B cell (primary cell): ENCODE measurements at regions of chr12 and their contacts with region 1.

Region 1: GRCh38 chr12:112025808-112026375 is 12.7 kb downstream of the ERP29 start:
- DNase-seq: peak; percentile 27
- ATAC-seq: no peak
- H3K4me3 ChIP-seq: no peak overlapping the region
- H3K4me3 Mint-ChIP-seq: no peak overlapping the region
- H3K27ac ChIP-seq: peak overlapping the region; percentile 0 to 48
- H3K27ac Mint-ChIP-seq: peak overlapping the region; percentile 28
- H3K4me1 ChIP-seq: peaks cover 9 to 10% of the 10 kb centered on the region in 2 donors
- H3K4me1 Mint-ChIP-seq: peaks cover 42% of the 10 kb centered on the region
- H3K27me3 ChIP-seq: no peaks in the 10 kb centered on the region
- H3K27me3 Mint-ChIP-seq: no peaks in the 10 kb centered on the region
- CTCF ChIP-seq: no peak

Region 2: DNA sequence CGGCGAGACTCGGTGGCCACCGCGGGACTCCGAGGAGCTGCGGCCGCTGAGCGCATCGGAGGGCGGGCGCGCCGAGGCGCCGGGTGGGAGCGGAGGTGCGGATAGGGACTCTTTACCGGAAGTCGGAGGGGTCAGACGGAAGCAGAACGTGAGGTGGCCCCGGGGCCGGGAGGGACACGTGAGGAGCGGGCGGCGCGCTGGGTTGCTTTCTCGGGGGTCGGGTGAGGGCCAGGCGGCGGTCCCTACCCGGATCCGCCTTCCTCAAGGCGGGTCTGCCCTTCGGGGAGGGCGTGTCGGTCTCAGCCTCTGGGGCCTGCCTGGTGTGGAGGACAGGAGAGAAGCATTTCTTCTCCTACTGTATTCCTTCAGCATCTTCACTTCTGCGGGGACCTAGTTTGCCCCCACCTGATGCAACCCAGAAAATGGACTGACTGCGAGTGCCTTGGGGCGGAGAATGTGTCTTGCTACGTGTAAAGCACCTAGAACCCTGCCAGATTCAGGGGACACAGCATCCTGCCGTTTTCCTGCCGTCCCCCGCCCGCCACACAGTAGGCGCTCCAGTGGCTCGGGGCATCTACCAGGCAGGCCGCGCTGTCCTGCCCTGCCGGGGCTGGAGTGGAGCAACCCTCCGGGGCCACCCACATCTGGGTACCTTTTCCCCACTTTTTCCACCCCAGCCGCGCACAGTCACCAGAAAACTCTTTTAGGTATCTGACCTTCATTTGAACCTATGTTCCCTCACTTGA is 426.3 kb before region 1 on chr12:
- CTCF ChIA-PET with region 1: no interaction called
- POLR2A ChIA-PET with region 1: no interaction called
- intact Hi-C with region 1: no loop called
- DNase-seq: peak; percentile 97
- ATAC-seq: peak; percentile 77
- H3K4me3 ChIP-seq: peak overlapping the region; percentile 60 to 92 (median 85)
- H3K4me3 Mint-ChIP-seq: peak overlapping the region; percentile 90
- H3K27ac ChIP-seq: peak overlapping the region; percentile 75 to 87
- H3K27ac Mint-ChIP-seq: peak overlapping the region; percentile 96
- H3K4me1 ChIP-seq: peaks cover 15% of the 10 kb centered on the region in 2 donors
- H3K4me1 Mint-ChIP-seq: peaks cover 28% of the 10 kb centered on the region
- H3K27me3 ChIP-seq: no peaks in the 10 kb centered on the region
- H3K27me3 Mint-ChIP-seq: no peaks in the 10 kb centered on the region
- CTCF ChIP-seq: no peak

Region 3: GRCh38 chr12:111841750-111842555 is 183.9 kb before region 1 on chr12 and contains the start of gene MAPKAPK5:
- CTCF ChIA-PET with region 1: no interaction called
- POLR2A ChIA-PET with region 1: no interaction called
- intact Hi-C with region 1: no loop called
- DNase-seq: peak; percentile 99
- ATAC-seq: peak; percentile 91
- H3K4me3 ChIP-seq: peak within 1 kb of the TSS; percentile 81 to 99 (median 82)
- H3K4me3 Mint-ChIP-seq: peak within 1 kb of the TSS; percentile 94
- H3K27ac ChIP-seq: peak within 1 kb of the TSS; percentile 85 to 87
- H3K27ac Mint-ChIP-seq: peak within 1 kb of the TSS; percentile 99
- H3K4me1 ChIP-seq: peaks cover 28 to 29% of the 10 kb centered on the region in 2 donors
- H3K4me1 Mint-ChIP-seq: peaks cover 50% of the 10 kb centered on the region
- H3K27me3 ChIP-seq: no peaks in the 10 kb centered on the region
- H3K27me3 Mint-ChIP-seq: no peaks in the 10 kb centered on the region
- CTCF ChIP-seq: no peak
- total RNA-seq, gene MAPKAPK5: 64.4 and 73.1 TPM in 2 replicates

Region 4: GRCh38 chr12:111993292-111994150 is 32.4 kb before region 1 on chr12:
- CTCF ChIA-PET with region 1: no interaction called
- POLR2A ChIA-PET with region 1: no interaction called
- intact Hi-C with region 1: loop called (anchors 5 kb)
- DNase-seq: peak; percentile 16
- ATAC-seq: peak; percentile 10
- H3K4me3 ChIP-seq: peak overlapping the region in 2 of 5 experiments; percentile 7 to 60
- H3K4me3 Mint-ChIP-seq: peak overlapping the region; percentile 91
- H3K27ac ChIP-seq: no peak overlapping the region
- H3K27ac Mint-ChIP-seq: no peak overlapping the region
- H3K4me1 ChIP-seq: peaks cover 42 to 45% of the 10 kb centered on the region in 2 donors
- H3K4me1 Mint-ChIP-seq: peaks cover 42% of the 10 kb centered on the region
- H3K27me3 ChIP-seq: peaks cover 0 to 17% (median 12%) of the 10 kb centered on the region in 4 experiments
- H3K27me3 Mint-ChIP-seq: peaks cover 26% of the 10 kb centered on the region
- CTCF ChIP-seq: no peak

Region 5: DNA sequence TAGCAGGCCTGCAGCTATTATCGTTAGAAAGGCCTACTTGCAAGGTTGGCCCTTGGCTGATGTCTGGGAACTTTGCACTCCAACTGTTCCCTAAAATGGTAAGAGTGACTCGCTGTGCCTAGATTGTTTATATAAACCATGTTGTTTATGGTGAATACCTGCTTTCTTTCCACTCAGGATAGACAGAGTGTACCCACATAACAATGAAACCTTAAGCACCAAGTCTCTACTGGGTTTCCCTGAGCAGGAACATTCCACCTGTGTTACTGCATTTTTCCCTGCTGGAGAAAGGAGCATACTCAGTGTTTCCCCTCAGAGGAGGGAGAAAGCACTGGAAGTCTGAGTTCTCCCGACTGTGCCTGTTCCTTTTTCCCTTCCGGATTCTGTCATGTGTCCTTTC is 20.1 kb after region 1 on chr12:
- CTCF ChIA-PET with region 1: no interaction called
- POLR2A ChIA-PET with region 1: interaction called, 8 read pairs
- intact Hi-C with region 1: loop called (anchors 1 kb)
- DNase-seq: no peak
- ATAC-seq: no peak
- H3K4me3 ChIP-seq: no peak overlapping the region
- H3K4me3 Mint-ChIP-seq: no peak overlapping the region
- H3K27ac ChIP-seq: no peak overlapping the region
- H3K27ac Mint-ChIP-seq: no peak overlapping the region
- H3K4me1 ChIP-seq: peaks cover 5 to 6% of the 10 kb centered on the region in 2 donors
- H3K4me1 Mint-ChIP-seq: peaks cover 8% of the 10 kb centered on the region
- H3K27me3 ChIP-seq: no peaks in the 10 kb centered on the region
- H3K27me3 Mint-ChIP-seq: no peaks in the 10 kb centered on the region
- CTCF ChIP-seq: no peak